Psoas muscle (tissue), 8 donors: ENCODE measurements at regions of chr15 and their contacts with region 1.

Region 1: DNA sequence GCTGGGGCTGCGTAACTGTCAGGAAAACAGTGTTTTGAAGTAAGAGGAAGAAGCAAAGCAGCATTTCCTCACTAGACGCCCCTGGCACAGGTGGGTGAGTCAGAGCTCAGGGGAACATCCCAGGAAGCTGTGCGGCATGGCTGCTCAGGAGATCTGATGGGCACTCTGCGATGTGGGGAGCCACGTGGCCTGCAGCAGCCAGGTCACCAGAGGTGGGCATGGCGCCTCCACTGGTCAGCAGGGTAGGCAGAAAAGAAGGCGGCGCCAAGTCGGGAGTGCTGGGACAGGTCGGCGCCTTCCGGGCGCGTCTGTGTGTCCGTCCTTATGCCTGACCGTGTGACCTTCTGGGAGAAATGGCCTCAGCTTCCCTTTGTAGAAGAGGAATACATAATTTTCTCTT is 249.9 kb upstream of the ST8SIA2 start:
- DNase-seq: no peak
- ATAC-seq: no peak
- H3K4me3 ChIP-seq: no peak overlapping the region
- H3K27ac ChIP-seq: no peak overlapping the region
- H3K4me1 ChIP-seq: no peaks in the 10 kb centered on the region
- H3K27me3 ChIP-seq: no peaks in the 10 kb centered on the region
- CTCF ChIP-seq: no peak

Region 2: GRCh38 chr15:92159906-92160841 is 16.4 kb after region 1 on chr15:
- intact Hi-C with region 1: loop called in 1 of 2 experiments (anchors 1 kb)
- DNase-seq: no peak
- ATAC-seq: no peak
- H3K4me3 ChIP-seq: no peak overlapping the region
- H3K27ac ChIP-seq: no peak overlapping the region
- H3K4me1 ChIP-seq: no peaks in the 10 kb centered on the region
- H3K27me3 ChIP-seq: no peaks in the 10 kb centered on the region
- CTCF ChIP-seq: no peak